ENCODE measurements at regions of chr6 and their contacts with region 1.

Region 1: DNA sequence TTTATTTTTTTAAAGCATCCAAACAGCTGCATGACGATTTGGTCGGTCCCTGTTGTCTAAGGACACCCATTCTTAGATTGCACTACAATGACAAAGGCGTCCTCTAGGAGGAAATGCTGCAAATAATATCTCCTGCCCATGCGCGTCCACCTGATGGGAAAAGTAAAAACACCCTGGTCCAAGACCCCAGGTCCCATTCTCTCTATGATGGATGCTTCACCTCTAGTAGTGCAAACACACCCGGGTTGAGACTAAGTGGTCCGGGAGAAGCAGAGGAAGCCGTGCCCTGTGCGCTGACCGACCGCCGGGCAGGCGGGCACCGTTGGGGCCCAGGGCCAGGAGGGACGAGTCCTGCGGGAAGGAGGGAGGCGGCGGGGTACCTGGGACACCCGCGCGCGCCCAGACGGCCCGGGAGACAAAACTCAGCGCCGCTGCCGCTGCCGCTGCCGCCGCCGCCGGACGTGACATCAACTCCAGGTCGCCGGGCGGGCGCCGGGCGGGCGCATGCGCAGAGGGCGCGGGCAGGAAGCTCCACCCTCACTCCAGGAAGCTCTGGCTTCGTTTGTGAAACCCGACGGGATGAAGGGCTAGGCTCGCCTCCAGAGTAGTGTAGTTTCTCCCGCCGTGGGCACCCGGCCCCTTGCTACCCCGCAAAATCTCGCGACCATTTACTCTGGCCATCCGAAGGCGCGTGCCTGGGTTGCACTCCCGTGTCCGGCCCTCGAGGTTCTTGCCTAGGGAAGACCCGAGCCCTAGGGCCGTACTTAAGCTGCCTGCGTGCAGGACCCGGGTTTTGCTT is at the start of gene TBC1D7:
- DNase-seq: peak; percentile 95
- ATAC-seq: peak; percentile 85
- H3K4me3 Mint-ChIP-seq: peak within 1 kb of the TSS; percentile 95
- H3K27ac Mint-ChIP-seq: peak within 1 kb of the TSS; percentile 98
- H3K4me1 Mint-ChIP-seq: peaks cover 36% of the 10 kb centered on the region
- H3K27me3 Mint-ChIP-seq: no peaks in the 10 kb centered on the region
- CTCF ChIP-seq: no peak
- total RNA-seq, gene TBC1D7: 17.3 and 18.5 TPM in 2 replicates

Region 2: DNA sequence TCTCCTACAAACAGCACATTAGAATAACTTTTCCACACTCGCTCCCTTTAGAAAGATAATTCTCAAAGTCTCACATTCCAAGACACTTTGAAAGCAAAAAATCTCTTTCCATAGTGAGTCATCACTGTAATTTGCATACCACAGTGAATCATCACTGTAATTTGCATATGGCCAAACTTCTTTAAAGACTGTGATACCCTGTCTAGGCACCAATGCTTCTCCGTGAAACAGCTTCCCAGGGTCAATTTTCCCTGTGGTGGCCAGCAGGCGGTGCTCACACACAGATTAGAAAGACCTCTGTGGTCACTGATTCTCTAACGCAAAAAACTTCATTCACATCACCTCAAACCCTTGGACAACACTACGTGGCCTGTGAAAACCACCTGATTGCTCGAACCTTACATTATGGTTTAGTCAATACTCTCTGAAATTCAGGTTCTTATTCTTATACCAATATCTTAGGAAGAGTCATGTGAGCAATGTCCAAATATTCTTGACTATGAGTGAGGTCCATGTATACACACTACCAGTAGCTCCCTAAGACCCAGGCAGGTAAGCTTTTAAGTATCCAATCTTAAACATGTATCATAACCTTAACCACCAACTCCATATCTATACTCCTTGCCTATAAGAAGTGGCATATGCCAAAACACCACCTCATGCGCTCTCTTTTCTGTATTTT is 690.2 kb before region 1 on chr6:
- CTCF ChIA-PET with region 1: interaction called, 3 read pairs
- POLR2A ChIA-PET with region 1: no interaction called
- intact Hi-C with region 1: loop called (anchors 1 kb)
- DNase-seq: no peak
- ATAC-seq: peak; percentile 58
- H3K4me3 Mint-ChIP-seq: no peak overlapping the region
- H3K27ac Mint-ChIP-seq: no peak overlapping the region
- H3K4me1 Mint-ChIP-seq: peaks cover 6% of the 10 kb centered on the region
- H3K27me3 Mint-ChIP-seq: peaks cover 20% of the 10 kb centered on the region
- CTCF ChIP-seq: no peak

Region 3: DNA sequence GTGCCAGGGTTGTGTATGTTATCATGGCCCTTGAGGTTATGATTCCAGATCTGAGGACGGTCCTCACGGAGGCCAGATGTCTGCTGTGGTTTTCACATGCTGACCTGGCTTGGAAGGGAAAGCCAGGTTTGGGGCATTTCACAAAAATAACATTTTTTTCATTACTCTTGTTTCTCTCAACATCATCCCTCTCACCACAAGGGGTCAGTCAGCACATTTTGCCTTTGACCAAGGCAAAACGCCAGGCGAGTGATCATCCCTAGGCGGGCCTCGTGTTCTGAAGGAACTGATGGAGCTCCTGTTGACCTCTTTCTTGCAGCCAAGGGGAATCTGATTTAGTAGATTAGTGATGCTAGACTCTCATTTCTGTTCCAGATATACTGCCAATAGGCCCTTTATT is 133.4 kb before region 1 on chr6:
- CTCF ChIA-PET with region 1: interaction called, 118 read pairs
- POLR2A ChIA-PET with region 1: interaction called, 12 read pairs
- intact Hi-C with region 1: loop called (anchors 1 kb)
- DNase-seq: peak; percentile 21
- ATAC-seq: peak; percentile 82
- H3K4me3 Mint-ChIP-seq: no peak overlapping the region
- H3K27ac Mint-ChIP-seq: no peak overlapping the region
- H3K4me1 Mint-ChIP-seq: peaks cover 11% of the 10 kb centered on the region
- H3K27me3 Mint-ChIP-seq: peaks cover 4% of the 10 kb centered on the region
- CTCF ChIP-seq: peak; percentile 55

Region 4: DNA sequence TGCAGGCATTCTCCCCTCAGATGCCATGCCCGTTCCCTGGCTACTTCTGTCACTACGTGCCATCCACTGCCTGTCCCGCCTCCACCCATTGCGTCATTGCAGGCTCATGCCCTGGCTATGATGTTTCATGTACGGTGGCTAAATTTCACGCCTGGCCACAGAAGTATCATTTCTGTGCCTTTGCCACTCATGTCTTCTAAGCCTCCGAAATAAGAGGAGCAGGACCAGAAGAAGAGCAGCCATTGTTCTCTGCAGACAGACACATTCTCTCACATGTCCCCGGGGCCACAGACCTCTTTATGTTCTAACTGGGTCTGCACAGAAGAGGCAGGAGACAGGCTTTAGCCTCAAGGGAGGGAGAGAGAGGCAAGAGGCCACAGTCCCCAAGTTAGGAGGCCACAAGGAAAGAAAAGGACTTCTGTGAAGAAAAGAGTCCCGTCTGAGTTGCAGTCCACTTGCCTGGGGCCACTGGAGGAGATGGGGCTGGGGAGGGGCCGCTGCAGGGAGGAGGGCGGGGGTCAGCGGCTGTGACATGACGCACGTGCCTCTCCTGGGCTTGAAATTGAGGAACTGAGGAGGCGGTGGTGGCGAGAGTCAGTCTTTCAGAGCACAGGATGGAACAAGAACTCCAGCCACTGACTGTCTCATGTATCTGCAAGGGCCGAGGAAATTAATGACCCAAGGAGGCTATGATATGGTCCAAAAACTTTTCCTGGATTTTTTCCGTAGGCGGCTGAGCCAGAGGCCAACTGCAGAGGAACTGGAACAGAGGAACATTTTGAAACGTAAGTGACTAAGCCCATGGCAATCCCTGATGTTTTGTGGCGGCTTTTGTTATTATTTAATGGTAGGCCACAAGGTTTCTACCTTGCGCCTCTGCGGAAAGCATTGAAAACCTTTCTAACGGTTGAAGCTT is 55.9 kb before region 1 on chr6:
- CTCF ChIA-PET with region 1: interaction called, 5 read pairs
- POLR2A ChIA-PET with region 1: interaction called, 55 read pairs
- intact Hi-C with region 1: loop called (anchors 1 kb)
- DNase-seq: peak; percentile 70
- ATAC-seq: peak; percentile 74
- H3K4me3 Mint-ChIP-seq: peak overlapping the region; percentile 95
- H3K27ac Mint-ChIP-seq: peak overlapping the region; percentile 96
- H3K4me1 Mint-ChIP-seq: peaks cover 77% of the 10 kb centered on the region
- H3K27me3 Mint-ChIP-seq: no peaks in the 10 kb centered on the region
- CTCF ChIP-seq: no peak

Region 5: DNA sequence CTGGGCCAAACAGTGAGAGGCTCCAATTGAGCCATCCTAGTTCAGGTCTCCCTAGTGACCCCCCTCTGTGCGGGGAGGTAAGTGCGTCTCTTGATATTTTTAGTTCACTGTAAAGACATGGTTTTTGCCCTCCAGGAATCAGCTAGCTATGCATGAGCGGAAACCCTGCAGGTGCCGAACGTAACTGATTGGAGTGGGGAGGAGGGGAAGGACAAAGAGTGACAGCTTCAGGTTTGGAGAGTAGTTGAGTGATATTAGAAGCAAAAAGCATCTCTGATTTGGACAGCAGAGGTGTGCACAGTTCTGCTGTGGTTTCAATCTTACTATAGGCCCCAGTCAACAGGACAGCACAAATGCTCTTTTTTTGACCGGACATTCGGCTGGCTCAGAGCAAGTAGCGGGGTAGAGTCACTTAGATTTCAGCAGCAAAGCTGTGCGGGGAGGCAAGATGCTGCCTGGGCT is 31.7 kb before region 1 on chr6:
- CTCF ChIA-PET with region 1: interaction called, 9 read pairs
- POLR2A ChIA-PET with region 1: interaction called, 80 read pairs
- intact Hi-C with region 1: loop called (anchors 1 kb)
- DNase-seq: no peak
- ATAC-seq: peak; percentile 11
- H3K4me3 Mint-ChIP-seq: peak overlapping the region; percentile 48
- H3K27ac Mint-ChIP-seq: peak overlapping the region; percentile 74
- H3K4me1 Mint-ChIP-seq: peaks cover 71% of the 10 kb centered on the region
- H3K27me3 Mint-ChIP-seq: no peaks in the 10 kb centered on the region
- CTCF ChIP-seq: no peak

Region 6: GRCh38 chr6:13526727-13527670 is 198.7 kb after region 1 on chr6:
- CTCF ChIA-PET with region 1: interaction called, 3 read pairs
- POLR2A ChIA-PET with region 1: interaction called, 10 read pairs
- intact Hi-C with region 1: no loop called
- DNase-seq: peak; percentile 41
- ATAC-seq: peak; percentile 90
- H3K4me3 Mint-ChIP-seq: peak overlapping the region; percentile 3
- H3K27ac Mint-ChIP-seq: peak overlapping the region; percentile 78
- H3K4me1 Mint-ChIP-seq: peaks cover 47% of the 10 kb centered on the region
- H3K27me3 Mint-ChIP-seq: no peaks in the 10 kb centered on the region
- CTCF ChIP-seq: no peak